Gastrocnemius medialis (tissue), 4 donors: ENCODE measurements at regions of chr17 and their contacts with region 1.

Region 1: DNA sequence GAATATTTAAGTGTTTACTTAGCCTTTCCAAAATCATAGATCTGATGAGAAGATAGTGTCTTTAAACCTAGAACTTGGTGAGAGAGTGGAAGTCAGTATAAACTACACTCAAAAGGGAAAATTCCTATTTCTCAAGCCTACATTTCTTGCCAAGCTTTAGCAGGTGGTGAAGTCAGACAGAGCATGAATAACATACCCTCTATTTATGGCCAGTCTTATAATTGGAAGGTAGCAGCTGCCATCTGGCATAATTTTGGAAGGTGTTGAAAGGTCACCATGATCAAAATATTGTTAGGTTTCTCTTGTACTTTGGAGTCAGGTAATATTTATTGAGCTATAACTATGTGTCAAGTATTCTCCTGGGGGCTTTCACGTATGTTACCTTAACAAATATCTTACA is 729.3 kb upstream of the KIF2B start:
- DNase-seq: no peak
- ATAC-seq: peak; percentile 51 to 87
- H3K4me3 ChIP-seq: no peak overlapping the region
- H3K27ac ChIP-seq: peak overlapping the region in 1 of 4 donors; percentile 42
- H3K4me1 ChIP-seq: peaks cover 31 to 46% of the 10 kb centered on the region in 2 donors
- H3K27me3 ChIP-seq: no peaks in the 10 kb centered on the region
- CTCF ChIP-seq: no peak
- POLR2A ChIP-seq: no peak

Region 2: DNA sequence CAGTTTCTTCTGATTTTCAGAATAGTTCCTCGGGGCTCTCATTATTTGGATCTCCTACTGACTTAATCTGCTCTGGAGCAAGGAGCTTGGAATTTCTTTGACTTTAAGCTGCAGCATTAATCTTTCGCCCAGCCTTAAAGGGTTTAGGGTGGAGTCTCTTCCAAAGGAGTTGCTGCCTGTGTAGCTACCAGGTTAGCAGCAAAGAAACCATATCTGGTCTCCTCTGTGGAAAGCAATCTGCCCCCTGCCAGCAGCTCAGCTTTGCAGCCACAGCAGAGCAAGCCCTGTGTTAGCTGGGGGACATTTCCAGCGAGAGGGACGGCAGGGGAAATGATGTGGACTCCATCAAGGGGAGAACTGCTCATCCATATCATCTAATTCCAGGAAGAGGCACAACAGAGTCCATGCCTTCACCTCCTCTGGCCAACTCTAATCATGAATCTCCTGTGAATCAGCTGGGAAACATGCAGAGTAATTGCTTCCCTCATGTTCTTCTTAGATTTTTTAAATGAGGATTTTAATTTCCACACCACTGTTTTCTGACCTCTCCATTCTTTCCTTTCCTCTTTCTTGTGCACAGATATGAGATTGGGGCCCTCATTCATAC is 107.2 kb before region 1 on chr17:
- in situ Hi-C with region 1: loop called in 1 of 4 experiments (anchors 25 kb)
- intact Hi-C with region 1: no loop called
- DNase-seq: no peak
- ATAC-seq: no peak
- H3K4me3 ChIP-seq: no peak overlapping the region
- H3K27ac ChIP-seq: no peak overlapping the region
- H3K4me1 ChIP-seq: no peaks in the 10 kb centered on the region
- H3K27me3 ChIP-seq: no peaks in the 10 kb centered on the region
- CTCF ChIP-seq: no peak
- POLR2A ChIP-seq: no peak

Region 3: DNA sequence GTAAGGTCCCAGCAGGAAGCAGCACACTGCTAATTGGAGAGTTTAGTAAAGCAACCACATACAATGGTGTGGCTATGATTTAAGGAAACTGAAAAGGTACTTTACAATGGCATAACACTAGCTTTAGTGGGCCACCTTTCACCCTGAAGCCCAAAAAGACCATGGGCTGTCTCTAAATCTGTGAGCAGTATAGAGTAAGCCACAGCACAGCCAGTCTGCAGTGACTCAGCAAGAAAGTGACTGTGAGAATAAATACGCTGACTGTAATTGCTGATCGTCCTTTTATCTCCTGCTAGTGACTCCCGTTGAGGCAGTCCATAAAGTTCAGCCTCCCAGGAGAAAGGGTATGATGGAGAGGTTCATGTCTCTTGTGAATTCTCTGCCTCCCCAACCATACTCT is 49.5 kb after region 1 on chr17:
- in situ Hi-C with region 1: no loop called
- intact Hi-C with region 1: loop called (anchors 10 kb)
- DNase-seq: no peak
- ATAC-seq: peak in 1 of 2 donors; percentile 66
- H3K4me3 ChIP-seq: peak overlapping the region in 1 of 4 donors; percentile 10
- H3K27ac ChIP-seq: no peak overlapping the region
- H3K4me1 ChIP-seq: peaks cover 0 to 3% of the 10 kb centered on the region in 2 donors
- H3K27me3 ChIP-seq: no peaks in the 10 kb centered on the region
- CTCF ChIP-seq: no peak
- POLR2A ChIP-seq: no peak